CD8-positive, alpha-beta T cell (primary cell): ENCODE measurements at regions of chr19 and their contacts with region 1.

Region 1: DNA sequence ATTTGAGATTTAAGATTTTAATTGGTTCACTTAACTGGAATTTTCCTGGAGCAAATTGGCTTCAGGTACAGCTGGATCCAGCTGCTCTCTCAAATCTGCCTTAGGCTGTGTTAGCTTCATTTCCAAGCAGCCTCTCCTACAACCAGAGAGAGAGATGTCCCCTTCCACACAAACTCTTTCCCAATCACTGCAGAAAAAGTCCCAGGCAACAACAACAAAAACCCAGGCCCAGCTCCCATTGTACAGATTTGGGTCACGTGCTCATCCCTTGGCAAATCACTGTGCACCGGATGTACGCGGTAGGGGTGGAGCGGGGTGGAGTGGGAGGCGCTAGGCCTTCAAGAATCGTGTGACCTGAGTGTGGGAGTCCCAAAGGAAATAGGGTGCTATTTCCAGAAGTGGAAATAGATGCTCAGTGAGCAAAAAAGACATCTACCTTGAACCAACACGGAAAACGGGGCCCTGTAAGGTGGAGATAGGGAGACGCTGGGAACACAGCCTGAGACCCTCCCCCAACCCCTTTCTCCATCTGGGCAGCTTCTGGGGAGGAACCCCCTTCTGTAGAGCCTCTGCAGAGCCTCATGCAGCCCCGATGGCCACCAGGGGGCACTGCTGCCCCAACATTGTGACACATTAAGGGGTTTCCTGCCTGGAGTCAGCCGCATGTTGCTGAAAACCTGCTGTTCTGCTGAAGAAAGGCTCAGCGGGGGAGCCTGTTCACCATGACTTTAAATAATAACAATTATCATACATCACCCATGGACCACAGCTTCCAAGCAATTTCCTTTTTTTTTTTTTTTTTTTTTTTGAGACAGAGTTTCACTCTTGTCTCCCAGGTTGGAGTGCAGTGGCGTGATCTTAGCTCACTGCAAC is 25.4 kb downstream of the HPN start:
- DNase-seq: peak; percentile 79 to 96 (median 89)
- ATAC-seq: peak; percentile 93
- H3K4me3 ChIP-seq: no peak overlapping the region
- H3K4me3 Mint-ChIP-seq: no peak overlapping the region
- H3K27ac ChIP-seq: peak overlapping the region in 1 of 2 experiments; percentile 25
- H3K27ac Mint-ChIP-seq: no peak overlapping the region
- H3K4me1 ChIP-seq: peaks cover 4% of the 10 kb centered on the region
- H3K4me1 Mint-ChIP-seq: peaks cover 4% of the 10 kb centered on the region
- H3K27me3 ChIP-seq: no peaks in the 10 kb centered on the region
- H3K27me3 Mint-ChIP-seq: no peaks in the 10 kb centered on the region
- CTCF ChIP-seq: peak; percentile 76

Region 2: DNA sequence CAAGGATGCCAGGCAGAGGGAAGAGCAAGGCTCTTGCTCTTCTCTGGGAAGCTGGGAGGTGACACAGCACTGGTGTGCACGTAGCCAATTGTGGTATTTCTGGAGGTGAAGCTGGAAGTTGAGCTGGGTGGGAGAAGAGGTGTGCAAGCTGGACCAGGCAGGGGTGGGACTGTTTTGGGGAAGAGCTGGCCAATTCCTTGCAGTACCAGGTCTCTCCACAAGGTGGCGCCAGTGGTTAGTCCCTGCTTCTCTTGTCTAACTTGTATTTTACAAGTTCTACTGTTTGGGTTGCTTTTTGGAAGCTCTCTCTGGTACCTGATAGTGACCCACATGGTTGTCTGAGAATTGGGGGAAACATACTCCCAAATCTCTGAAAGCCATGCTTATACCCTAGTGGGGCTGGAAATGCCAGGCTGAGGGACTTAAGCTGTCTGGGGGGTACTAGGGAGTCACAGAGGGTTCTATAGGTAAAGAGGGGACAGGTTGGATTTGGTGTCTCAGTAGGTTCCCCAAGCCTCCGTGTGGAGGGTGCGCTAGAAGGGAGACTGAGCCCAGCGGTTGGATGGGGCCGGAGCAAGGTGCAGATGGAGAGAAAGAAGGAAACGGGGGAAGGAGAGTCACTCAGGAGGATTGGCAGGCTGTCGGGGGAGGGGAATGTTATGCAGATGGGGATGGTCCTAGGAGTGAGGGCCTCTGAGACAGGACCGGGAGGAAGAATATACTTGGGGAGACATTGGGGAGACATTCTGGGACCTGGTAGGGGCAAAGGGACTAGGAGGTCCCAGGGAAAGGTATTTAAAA is 22.4 kb before region 1 on chr19:
- CTCF ChIA-PET with region 1: interaction called, 11 read pairs
- POLR2A ChIA-PET with region 1: no interaction called
- intact Hi-C with region 1: no loop called
- DNase-seq: peak; percentile 39 to 75 (median 65)
- ATAC-seq: peak; percentile 30
- H3K4me3 ChIP-seq: no peak overlapping the region
- H3K4me3 Mint-ChIP-seq: no peak overlapping the region
- H3K27ac ChIP-seq: no peak overlapping the region
- H3K27ac Mint-ChIP-seq: no peak overlapping the region
- H3K4me1 ChIP-seq: peaks cover 28% of the 10 kb centered on the region
- H3K4me1 Mint-ChIP-seq: peaks cover 33% of the 10 kb centered on the region
- H3K27me3 ChIP-seq: peaks cover 0 to 9% of the 10 kb centered on the region in 2 experiments
- H3K27me3 Mint-ChIP-seq: no peaks in the 10 kb centered on the region
- CTCF ChIP-seq: peak; percentile 98

Region 3: DNA sequence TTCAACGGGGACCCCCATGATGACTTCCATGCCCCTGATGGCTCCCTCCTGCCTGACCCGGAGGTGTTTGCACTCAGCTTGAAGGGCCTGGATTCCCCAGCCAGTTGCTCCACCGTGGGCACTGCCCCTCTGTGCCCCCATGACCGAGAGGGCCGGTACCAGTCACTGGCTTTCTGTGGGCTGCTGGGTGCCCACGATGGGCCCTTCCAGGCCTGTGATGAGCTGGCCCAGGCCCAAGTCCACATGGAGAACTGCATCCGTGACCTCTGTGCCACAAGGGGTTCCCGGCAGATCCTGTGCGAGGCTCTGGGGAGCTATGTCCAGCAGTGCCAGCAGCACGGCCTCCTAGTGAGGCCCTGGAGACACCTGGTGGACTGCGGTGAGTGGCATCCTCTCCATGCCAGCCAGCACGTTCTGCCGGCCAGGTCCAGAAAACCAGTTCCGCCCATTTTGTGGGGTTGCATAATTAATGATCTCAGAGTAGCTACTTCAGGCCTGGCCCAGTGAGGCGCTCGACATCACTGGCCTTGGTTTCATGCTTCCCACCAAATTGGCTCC is 13.8 kb after region 1 on chr19:
- CTCF ChIA-PET with region 1: interaction called, 20 read pairs
- POLR2A ChIA-PET with region 1: no interaction called
- intact Hi-C with region 1: no loop called
- DNase-seq: no peak
- ATAC-seq: no peak
- H3K4me3 ChIP-seq: no peak overlapping the region
- H3K4me3 Mint-ChIP-seq: no peak overlapping the region
- H3K27ac ChIP-seq: no peak overlapping the region
- H3K27ac Mint-ChIP-seq: no peak overlapping the region
- H3K4me1 ChIP-seq: no peaks in the 10 kb centered on the region
- H3K4me1 Mint-ChIP-seq: peaks cover 3% of the 10 kb centered on the region
- H3K27me3 ChIP-seq: no peaks in the 10 kb centered on the region
- H3K27me3 Mint-ChIP-seq: peaks cover 6% of the 10 kb centered on the region
- CTCF ChIP-seq: no peak

Region 4: GRCh38 chr19:35114353-35115176 is 47.6 kb after region 1 on chr19:
- CTCF ChIA-PET with region 1: interaction called, 24 read pairs
- POLR2A ChIA-PET with region 1: no interaction called
- intact Hi-C with region 1: no loop called
- DNase-seq: peak; percentile 41 to 83 (median 74)
- ATAC-seq: peak; percentile 97
- H3K4me3 ChIP-seq: no peak overlapping the region
- H3K4me3 Mint-ChIP-seq: no peak overlapping the region
- H3K27ac ChIP-seq: no peak overlapping the region
- H3K27ac Mint-ChIP-seq: no peak overlapping the region
- H3K4me1 ChIP-seq: peaks cover 9% of the 10 kb centered on the region
- H3K4me1 Mint-ChIP-seq: peaks cover 5% of the 10 kb centered on the region
- H3K27me3 ChIP-seq: peaks cover 0 to 2% of the 10 kb centered on the region in 2 experiments
- H3K27me3 Mint-ChIP-seq: no peaks in the 10 kb centered on the region
- CTCF ChIP-seq: peak; percentile 92

Region 5: DNA sequence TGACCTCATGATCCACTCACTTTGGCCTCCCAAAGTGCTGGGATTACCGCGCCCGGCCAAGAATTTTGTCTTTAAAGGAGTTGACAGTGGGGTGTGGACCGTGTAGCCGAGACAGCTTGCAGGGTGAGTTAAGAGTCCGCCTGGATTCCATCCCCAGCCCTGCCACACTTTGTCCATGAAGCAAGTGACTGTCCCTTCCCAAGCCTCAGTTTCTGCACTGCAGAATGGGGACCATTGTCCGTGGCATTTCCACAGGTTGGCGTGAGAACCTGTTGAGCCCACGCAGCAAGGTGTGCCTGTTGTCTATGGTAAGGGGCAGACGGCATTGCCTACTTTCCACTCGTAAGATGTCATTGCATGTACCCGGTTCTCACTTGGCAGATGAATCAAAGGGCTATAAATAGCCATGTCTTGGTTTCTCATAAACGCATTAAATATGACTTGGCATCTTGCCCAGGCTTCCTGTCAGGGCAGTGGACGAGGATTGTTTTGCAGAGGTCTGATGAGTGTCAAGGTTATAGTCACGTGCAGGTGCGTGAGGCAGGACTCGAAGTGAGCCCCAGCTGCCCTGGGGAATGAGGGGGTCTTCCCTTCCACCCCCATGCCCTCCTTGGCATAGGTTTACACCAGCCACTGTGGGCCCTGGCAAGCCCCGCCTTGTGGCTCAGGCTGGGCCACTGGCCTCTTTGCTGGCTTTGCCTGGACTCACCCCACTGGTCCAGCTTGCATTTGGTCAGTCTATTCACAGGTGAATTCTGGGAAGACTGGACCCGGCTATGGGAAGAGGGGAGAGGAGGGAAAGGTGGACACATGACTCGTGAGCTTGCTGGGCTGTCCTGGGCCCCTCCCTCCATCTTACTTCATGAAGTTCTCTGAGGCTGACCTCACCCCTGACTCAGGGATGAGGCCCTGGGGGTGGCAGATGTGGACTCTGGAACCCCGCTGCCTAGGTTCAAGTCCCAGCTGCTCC is 147.0 kb after region 1 on chr19:
- CTCF ChIA-PET with region 1: interaction called, 10 read pairs
- POLR2A ChIA-PET with region 1: no interaction called
- intact Hi-C with region 1: loop called in 1 of 2 experiments (anchors 1 kb)
- DNase-seq: peak; percentile 60 to 97 (median 80)
- ATAC-seq: peak; percentile 34
- H3K4me3 ChIP-seq: no peak overlapping the region
- H3K4me3 Mint-ChIP-seq: peak overlapping the region; percentile 65
- H3K27ac ChIP-seq: peak overlapping the region; percentile 96 to 97
- H3K27ac Mint-ChIP-seq: peak overlapping the region; percentile 100
- H3K4me1 ChIP-seq: peaks cover 56% of the 10 kb centered on the region
- H3K4me1 Mint-ChIP-seq: peaks cover 64% of the 10 kb centered on the region
- H3K27me3 ChIP-seq: no peaks in the 10 kb centered on the region
- H3K27me3 Mint-ChIP-seq: no peaks in the 10 kb centered on the region
- CTCF ChIP-seq: no peak

Region 6: DNA sequence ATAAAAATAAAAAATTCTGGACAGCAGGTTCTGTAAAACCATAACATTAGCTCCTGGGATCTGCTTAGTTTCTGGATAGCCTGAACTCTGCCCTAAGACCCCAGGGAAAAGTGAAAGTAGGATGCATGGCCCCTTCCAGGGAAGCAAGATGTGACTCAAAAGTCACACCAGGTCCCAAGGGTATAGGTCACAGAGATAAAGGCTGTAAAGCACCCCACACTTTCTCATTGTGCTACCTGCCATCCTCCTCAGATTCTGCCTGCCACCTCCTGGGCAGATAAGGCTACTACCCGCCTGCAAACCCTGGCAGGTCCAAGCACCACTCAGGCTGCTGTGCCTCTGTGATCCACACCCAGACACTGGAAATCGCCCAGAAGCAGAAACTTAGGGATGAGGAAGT is 401.7 kb after region 1 on chr19:
- CTCF ChIA-PET with region 1: no interaction called
- POLR2A ChIA-PET with region 1: no interaction called
- intact Hi-C with region 1: loop called (anchors 1 to 5 kb)
- DNase-seq: peak; percentile 40 to 83 (median 68)
- ATAC-seq: peak; percentile 100
- H3K4me3 ChIP-seq: no peak overlapping the region
- H3K4me3 Mint-ChIP-seq: no peak overlapping the region
- H3K27ac ChIP-seq: no peak overlapping the region
- H3K27ac Mint-ChIP-seq: no peak overlapping the region
- H3K4me1 ChIP-seq: peaks cover 3% of the 10 kb centered on the region
- H3K4me1 Mint-ChIP-seq: peaks cover 8% of the 10 kb centered on the region
- H3K27me3 ChIP-seq: no peaks in the 10 kb centered on the region
- H3K27me3 Mint-ChIP-seq: no peaks in the 10 kb centered on the region
- CTCF ChIP-seq: peak; percentile 68